ENCODE measurements at regions of chr9 and their contacts with region 1.

Region 1: GRCh38 chr9:2727966-2728613 is 10.8 kb downstream of the KCNV2 start:
- DNase-seq: peak in 4 of 5 donors; percentile 32 to 45 (median 42)
- ATAC-seq: peak; percentile 67 to 83 (median 82)
- H3K4me3 ChIP-seq: no peak overlapping the region
- H3K27ac ChIP-seq: peak overlapping the region in 2 of 12 donors; percentile 8 to 9
- H3K4me1 ChIP-seq: peaks cover 0 to 23% (median 8%) of the 10 kb centered on the region in 12 donors
- H3K27me3 ChIP-seq: no peaks in the 10 kb centered on the region
- CTCF ChIP-seq: peak; percentile 45 to 80 (median 67)
- POLR2A ChIP-seq: no peak

Region 2: GRCh38 chr9:2125906-2126305 is 602.2 kb before region 1 on chr9:
- intact Hi-C with region 1: loop called in 8 of 10 experiments (anchors 5 to 10 kb)
- DNase-seq: no peak
- ATAC-seq: peak in 2 of 4 donors; percentile 50 to 72
- H3K4me3 ChIP-seq: peak overlapping the region in 9 of 12 donors; percentile 8 to 36 (median 25)
- H3K27ac ChIP-seq: peak overlapping the region in 11 of 12 donors; percentile 48 to 85 (median 60)
- H3K4me1 ChIP-seq: peaks cover 2 to 75% (median 56%) of the 10 kb centered on the region in 12 donors
- H3K27me3 ChIP-seq: no peaks in the 10 kb centered on the region
- CTCF ChIP-seq: no peak
- POLR2A ChIP-seq: no peak

Region 3: GRCh38 chr9:2241836-2242741 is 486.0 kb before region 1 on chr9:
- intact Hi-C with region 1: loop called in 3 of 10 experiments (anchors 10 kb)
- DNase-seq: peak; percentile 82 to 87 (median 84)
- ATAC-seq: peak; percentile 88 to 96 (median 96)
- H3K4me3 ChIP-seq: peak overlapping the region; percentile 37 to 67 (median 57)
- H3K27ac ChIP-seq: peak overlapping the region in 11 of 12 donors; percentile 42 to 77 (median 65)
- H3K4me1 ChIP-seq: peaks cover 0 to 20% (median 6%) of the 10 kb centered on the region in 12 donors
- H3K27me3 ChIP-seq: no peaks in the 10 kb centered on the region
- CTCF ChIP-seq: peak in 1 of 12 donors; percentile 7
- POLR2A ChIP-seq: peak in 1 of 2 donors; percentile 41

Region 4: DNA sequence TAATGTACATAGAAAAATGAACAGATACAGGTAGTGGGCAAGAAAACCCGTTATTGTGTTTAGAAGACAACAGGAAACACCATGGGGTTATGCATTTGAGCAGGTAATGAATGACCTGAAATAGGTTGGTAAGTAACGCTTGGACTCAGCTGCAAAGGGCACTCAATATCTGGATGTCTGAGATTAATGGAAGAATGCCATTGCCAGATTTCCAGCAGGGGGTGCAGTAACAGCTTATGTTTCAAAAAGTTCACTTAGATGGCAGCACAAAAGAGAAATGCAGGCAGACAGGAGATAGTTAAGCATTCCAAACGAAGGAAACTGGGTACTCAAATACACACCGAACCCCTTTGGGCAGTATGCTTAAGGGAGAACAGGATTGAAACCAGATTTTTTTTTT is 392.0 kb before region 1 on chr9:
- intact Hi-C with region 1: loop called in 1 of 10 experiments (anchors 5 kb)
- DNase-seq: no peak
- ATAC-seq: no peak
- H3K4me3 ChIP-seq: no peak overlapping the region
- H3K27ac ChIP-seq: no peak overlapping the region
- H3K4me1 ChIP-seq: peaks cover 0 to 31% (median 1%) of the 10 kb centered on the region in 12 donors
- H3K27me3 ChIP-seq: no peaks in the 10 kb centered on the region
- CTCF ChIP-seq: peak in 8 of 12 donors; percentile 11 to 49 (median 32)
- POLR2A ChIP-seq: no peak

Region 5: DNA sequence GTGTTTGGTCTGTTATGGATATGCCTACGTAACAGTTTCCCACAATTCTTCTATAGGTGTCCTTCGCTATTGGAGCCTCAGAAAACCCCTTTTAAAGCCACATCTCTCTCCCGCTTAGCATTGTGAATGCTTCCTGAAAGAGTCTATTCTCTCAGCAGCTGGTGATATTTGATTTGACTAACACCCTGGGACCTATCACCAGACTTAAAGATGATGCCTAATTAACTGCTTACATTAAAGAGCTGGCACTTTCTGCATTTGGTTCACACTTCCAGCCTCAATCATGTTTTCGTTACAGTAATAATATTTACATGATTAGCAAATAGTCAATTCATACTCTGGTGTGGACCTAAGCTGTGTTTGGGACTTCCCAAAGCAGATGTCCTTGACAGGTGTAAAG is 196.6 kb before region 1 on chr9:
- intact Hi-C with region 1: loop called in 1 of 10 experiments (anchors 10 kb)
- DNase-seq: no peak
- ATAC-seq: no peak
- H3K4me3 ChIP-seq: no peak overlapping the region
- H3K27ac ChIP-seq: no peak overlapping the region
- H3K4me1 ChIP-seq: peaks cover 0 to 3% (median 0%) of the 10 kb centered on the region in 12 donors
- H3K27me3 ChIP-seq: no peaks in the 10 kb centered on the region
- CTCF ChIP-seq: no peak
- POLR2A ChIP-seq: no peak

Region 6: DNA sequence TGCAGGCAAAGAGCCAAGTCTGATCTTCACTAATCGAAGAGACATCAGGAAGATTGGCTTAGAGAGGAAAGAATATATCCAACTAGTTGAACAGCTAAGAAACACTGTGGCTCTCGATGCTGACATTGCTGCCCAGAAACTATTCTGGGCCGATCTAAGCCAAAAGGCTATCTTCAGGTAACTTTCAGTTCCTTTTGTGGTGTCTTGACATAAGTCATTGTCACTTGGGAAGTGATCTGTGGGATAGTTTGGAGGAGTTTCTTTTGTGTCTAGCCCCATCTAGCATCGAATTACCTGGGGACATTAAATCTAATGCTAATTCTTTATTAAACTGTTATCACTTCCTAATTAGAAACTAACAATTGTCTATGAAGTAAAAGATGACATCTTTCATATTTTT is 82.5 kb before region 1 on chr9:
- intact Hi-C with region 1: loop called in 1 of 10 experiments (anchors 10 kb)
- DNase-seq: no peak
- ATAC-seq: no peak
- H3K4me3 ChIP-seq: no peak overlapping the region
- H3K27ac ChIP-seq: no peak overlapping the region
- H3K4me1 ChIP-seq: no peaks in the 10 kb centered on the region
- H3K27me3 ChIP-seq: no peaks in the 10 kb centered on the region
- CTCF ChIP-seq: no peak
- POLR2A ChIP-seq: no peak

Region 7: DNA sequence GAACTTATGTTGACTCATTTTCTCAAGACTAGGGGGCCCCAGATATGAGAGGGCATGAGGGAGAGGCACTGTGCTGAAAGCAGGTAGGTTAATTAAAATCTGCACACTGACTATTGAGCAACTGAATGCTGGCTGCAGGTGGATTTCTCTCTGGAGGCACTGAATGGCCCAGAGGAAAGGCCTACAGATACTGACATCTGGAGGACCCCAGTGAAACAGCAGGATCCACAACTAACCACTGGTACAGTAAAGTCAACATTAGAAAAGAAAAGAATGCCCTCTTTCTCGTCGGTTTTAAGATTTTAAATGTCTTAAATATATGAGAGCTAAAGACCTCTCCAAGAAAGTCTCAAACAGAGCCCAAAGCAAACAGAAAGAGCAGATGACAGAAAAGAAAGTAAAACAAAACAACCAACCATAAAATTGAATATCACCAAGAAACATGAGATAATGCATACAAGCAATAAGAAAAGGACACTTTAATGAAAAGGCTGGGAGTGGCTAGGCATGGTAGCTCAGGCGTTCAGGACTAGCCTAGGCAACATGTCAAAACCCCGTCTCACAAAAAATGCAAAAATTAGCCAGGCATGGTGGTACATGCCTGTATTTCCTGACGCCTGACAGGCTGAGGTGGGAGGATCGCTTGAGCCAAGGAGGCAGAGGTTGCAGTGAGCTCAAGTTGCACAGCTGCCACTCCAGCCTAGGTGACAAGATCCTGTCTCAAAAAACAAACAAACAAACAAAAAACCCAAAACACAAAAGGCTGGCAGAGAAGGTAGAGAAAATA is 72.5 kb after region 1 on chr9:
- intact Hi-C with region 1: no loop called
- DNase-seq: no peak
- ATAC-seq: peak in 3 of 4 donors; percentile 70 to 78 (median 74)
- H3K4me3 ChIP-seq: no peak overlapping the region
- H3K27ac ChIP-seq: no peak overlapping the region
- H3K4me1 ChIP-seq: peaks cover 0 to 27% (median 0%) of the 10 kb centered on the region in 12 donors
- H3K27me3 ChIP-seq: no peaks in the 10 kb centered on the region
- CTCF ChIP-seq: peak in 11 of 12 donors; percentile 23 to 56 (median 52)
- POLR2A ChIP-seq: no peak

Region 8: DNA sequence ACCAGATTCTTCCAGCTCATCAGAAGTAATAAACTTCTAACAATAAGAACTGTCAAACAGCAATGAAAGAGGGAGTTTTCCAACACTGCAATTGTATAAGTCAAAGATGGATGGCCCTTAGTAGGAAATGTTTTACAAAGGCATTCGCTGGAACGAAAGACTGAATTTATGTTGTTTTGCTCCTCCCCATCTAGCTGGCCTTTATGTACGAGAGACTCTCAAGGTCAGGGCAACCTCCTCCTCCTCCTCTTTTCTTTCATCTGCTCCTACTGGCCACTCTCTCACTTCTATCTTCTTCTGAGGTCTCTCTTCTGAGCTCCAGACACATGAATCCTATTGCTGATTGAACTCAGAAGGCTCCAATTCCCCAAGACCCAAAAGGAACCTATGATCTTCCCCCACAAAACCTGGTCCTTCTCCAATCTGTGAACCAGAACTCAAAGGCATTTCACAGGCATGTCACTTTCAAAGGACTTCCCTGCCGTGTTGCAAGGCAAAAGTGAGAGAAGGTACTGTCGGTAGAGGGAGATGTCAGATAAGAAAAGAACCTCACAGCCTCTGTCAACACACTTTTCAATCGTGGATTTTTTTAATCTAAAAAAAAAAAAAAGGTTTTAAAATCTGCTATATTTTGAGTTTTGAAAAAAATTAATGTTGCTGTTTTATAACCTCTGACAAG is 144.3 kb after region 1 on chr9:
- intact Hi-C with region 1: no loop called
- DNase-seq: no peak
- ATAC-seq: no peak
- H3K4me3 ChIP-seq: no peak overlapping the region
- H3K27ac ChIP-seq: no peak overlapping the region
- H3K4me1 ChIP-seq: no peaks in the 10 kb centered on the region
- H3K27me3 ChIP-seq: peaks cover 0 to 29% (median 5%) of the 10 kb centered on the region in 9 donors
- CTCF ChIP-seq: peak in 3 of 12 donors; percentile 12 to 27 (median 26)
- POLR2A ChIP-seq: no peak

Measured in heart left ventricle (tissue), 16 donors.